ENCODE measurements at regions of chr15 and their contacts with region 1.

Region 1: GRCh38 chr15:90071208-90071807 is 31.0 kb downstream of the IDH2 start:
- DNase-seq: peak; percentile 83 to 89 (median 84)
- ATAC-seq: peak; percentile 23 to 83 (median 58)
- H3K4me3 ChIP-seq: no peak overlapping the region
- H3K27ac ChIP-seq: peak overlapping the region in 4 of 12 donors; percentile 8 to 60 (median 16)
- H3K4me1 ChIP-seq: peaks cover 0 to 27% (median 5%) of the 10 kb centered on the region in 12 donors
- H3K27me3 ChIP-seq: no peaks in the 10 kb centered on the region
- CTCF ChIP-seq: peak; percentile 73 to 90 (median 82)
- POLR2A ChIP-seq: no peak

Region 2: DNA sequence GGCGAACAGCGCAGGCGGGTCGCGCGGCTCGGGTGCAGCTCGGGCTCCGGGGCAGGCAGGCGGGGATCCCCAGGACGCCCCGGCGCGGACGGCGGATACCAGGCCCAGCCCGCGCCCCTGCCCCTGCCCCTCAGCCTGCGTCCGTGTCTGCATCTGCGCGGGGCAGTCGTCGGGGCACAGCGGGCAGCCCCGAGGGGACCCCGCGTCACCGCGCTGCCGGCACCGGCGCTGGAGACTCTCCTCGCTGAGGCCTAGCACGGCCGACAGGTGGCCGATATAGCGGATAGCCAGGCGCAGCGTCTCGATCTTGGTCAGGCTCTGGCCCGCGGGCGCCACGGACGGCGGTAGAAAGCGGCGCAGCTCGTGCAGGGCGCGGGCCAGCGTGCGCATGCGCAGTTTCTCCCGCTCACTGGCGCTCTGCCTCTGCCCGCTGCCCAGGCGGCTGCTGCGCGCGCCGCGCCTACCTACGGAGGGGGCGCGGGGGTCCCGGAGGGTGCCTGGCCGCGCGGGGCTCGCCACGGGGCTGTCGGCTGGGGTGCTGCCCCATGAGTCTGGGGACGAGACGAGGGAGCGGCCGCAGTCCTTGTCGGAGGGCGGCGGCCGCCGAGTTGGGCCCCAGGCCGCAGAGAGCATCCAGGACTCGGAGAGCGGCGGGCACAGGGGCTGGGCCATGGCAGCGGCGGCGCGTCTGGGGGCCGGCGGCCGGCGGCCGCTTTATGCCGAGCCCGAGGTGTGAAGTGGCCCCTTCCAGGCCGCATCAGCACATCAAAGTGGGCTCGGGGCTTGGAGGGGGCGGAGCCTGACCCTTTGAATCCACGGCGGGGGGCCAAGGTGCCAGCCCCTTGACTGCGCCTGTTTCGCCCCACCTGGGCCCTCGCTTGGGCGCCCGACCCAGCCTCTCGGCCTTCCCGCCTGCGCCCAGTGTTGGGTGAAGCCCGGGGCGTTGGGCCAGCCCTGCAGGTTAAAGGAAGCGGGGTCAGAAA is 320.5 kb before region 1 on chr15 and contains the start of gene MESP1:
- intact Hi-C with region 1: loop called in 3 of 10 experiments (anchors 10 kb)
- DNase-seq: peak; percentile 90 to 96 (median 93)
- ATAC-seq: peak; percentile 89 to 97 (median 94)
- H3K4me3 ChIP-seq: peak within 1 kb of the TSS; percentile 57 to 84 (median 74)
- H3K27ac ChIP-seq: peak within 1 kb of the TSS in 7 of 12 donors; percentile 27 to 81 (median 57)
- H3K4me1 ChIP-seq: peaks cover 0 to 18% (median 12%) of the 10 kb centered on the region in 12 donors
- H3K27me3 ChIP-seq: peaks cover 0 to 22% (median 4%) of the 10 kb centered on the region in 9 donors
- CTCF ChIP-seq: peak; percentile 40 to 93 (median 68)
- POLR2A ChIP-seq: peak in 1 of 2 donors; percentile 52
- total RNA-seq, gene MESP1: 1.3 to 6.9 (median 5.1) TPM

Region 3: GRCh38 chr15:89760303-89761008 is 310.9 kb before region 1 on chr15:
- intact Hi-C with region 1: loop called in 7 of 10 experiments (anchors 5 to 10 kb)
- DNase-seq: peak; percentile 67 to 89 (median 77)
- ATAC-seq: peak; percentile 76 to 93 (median 90)
- H3K4me3 ChIP-seq: no peak overlapping the region
- H3K27ac ChIP-seq: no peak overlapping the region
- H3K4me1 ChIP-seq: peaks cover 0 to 12% (median 0%) of the 10 kb centered on the region in 12 donors
- H3K27me3 ChIP-seq: no peaks in the 10 kb centered on the region
- CTCF ChIP-seq: peak; percentile 91 to 97 (median 94)
- POLR2A ChIP-seq: no peak

Region 4: DNA sequence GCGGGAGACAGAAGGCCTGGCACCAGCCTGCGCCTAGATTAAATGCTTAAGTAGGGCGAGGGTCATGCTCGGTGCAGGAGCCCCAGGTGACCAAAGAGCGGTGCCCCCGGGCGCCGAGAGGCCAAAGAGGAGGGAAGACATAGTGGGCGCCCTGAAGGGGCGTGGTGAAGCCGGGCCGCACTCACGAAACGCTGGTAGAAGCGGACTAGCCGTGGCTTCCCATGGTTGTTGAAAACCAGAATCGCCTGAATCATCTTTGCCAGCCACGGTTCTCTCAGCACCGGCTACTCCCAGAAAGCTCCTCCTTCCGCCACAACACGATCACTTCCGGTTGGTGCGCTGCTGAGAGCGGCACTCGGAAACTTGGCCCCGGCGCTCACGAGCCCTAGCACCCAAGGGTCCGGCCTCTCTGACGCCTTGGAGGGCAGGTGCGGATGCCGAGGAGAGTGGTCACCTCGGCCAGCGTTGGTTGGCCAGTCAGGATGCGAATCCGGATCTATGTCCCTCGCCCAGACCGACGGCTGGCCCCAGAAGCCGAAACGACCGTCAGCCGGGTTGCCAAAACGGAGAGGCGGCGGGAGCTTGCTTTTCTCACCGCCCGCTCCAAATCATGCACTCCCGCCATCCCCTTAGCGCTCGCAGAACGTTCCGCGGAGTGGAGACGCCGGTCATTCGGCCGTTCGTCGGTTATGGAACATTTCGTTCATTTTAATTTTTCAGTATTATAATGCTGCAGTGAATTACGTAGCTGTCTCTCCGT is 177.4 kb before region 1 on chr15 and contains the start of gene AP3S2:
- intact Hi-C with region 1: loop called in 6 of 10 experiments (anchors 2 to 5 kb)
- DNase-seq: peak; percentile 90 to 94 (median 93)
- ATAC-seq: peak; percentile 98 to 99 (median 99)
- H3K4me3 ChIP-seq: peak within 1 kb of the TSS; percentile 55 to 100 (median 91)
- H3K27ac ChIP-seq: peak within 1 kb of the TSS; percentile 42 to 98 (median 92)
- H3K4me1 ChIP-seq: peaks cover 0 to 30% (median 13%) of the 10 kb centered on the region in 12 donors
- H3K27me3 ChIP-seq: no peaks in the 10 kb centered on the region
- CTCF ChIP-seq: peak in 1 of 12 donors; percentile 7
- POLR2A ChIP-seq: peak in 1 of 2 donors; percentile 61
- total RNA-seq, gene AP3S2: 37.1 to 64.6 (median 43.3) TPM

Region 5: GRCh38 chr15:89904519-89904918 is 166.8 kb before region 1 on chr15:
- intact Hi-C with region 1: loop called in 5 of 10 experiments (anchors 5 kb)
- DNase-seq: no peak
- ATAC-seq: no peak
- H3K4me3 ChIP-seq: no peak overlapping the region
- H3K27ac ChIP-seq: no peak overlapping the region
- H3K4me1 ChIP-seq: peaks cover 0 to 9% (median under 1%) of the 10 kb centered on the region in 12 donors
- H3K27me3 ChIP-seq: no peaks in the 10 kb centered on the region
- CTCF ChIP-seq: no peak
- POLR2A ChIP-seq: no peak

Region 6: DNA sequence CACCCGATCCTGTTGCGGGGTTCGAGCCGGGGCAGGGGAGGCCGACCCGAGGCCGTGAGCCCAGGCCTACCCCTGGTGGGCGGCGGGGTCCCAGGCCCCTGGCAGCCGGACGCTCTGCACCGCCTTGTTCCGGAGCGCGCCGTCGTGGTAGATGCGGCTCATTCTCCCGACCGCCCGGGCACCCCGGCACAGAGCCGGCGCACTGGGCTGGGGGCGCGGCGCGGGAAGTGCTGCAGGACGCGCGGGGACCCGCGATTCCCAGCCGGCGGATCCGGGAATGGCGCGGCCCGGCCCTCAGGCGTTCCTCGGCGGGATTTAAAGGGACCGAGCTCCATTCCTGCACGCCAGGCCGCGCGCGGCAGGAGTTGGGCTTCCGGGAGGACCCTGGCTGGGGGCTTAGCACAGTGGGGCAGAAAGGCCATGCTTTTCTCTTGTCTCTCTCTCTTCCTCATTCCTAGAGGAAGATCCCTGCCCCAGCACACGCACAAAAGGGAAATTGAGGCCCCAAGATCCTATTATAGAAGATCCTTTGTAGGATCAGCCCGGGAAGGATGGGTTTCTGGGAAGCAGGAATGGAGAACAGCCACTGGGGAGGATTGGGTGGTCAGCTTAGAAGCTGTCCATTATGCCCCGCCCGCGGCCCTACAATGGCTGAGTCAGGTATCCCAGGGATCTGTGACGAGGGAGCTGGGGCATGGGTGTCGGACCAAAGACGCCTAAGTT is 158.5 kb before region 1 on chr15 and contains the start of gene ARPIN:
- intact Hi-C with region 1: loop called in 4 of 10 experiments (anchors 5 kb)
- DNase-seq: peak; percentile 65 to 83 (median 66)
- ATAC-seq: peak; percentile 69 to 92 (median 84)
- H3K4me3 ChIP-seq: peak within 1 kb of the TSS; percentile 65 to 99 (median 84)
- H3K27ac ChIP-seq: peak within 1 kb of the TSS in 11 of 12 donors; percentile 41 to 90 (median 77)
- H3K4me1 ChIP-seq: peaks cover 0 to 26% (median 13%) of the 10 kb centered on the region in 12 donors
- H3K27me3 ChIP-seq: no peaks in the 10 kb centered on the region
- CTCF ChIP-seq: no peak
- POLR2A ChIP-seq: no peak
- total RNA-seq, gene ARPIN: 7.3 to 15.3 (median 11.5) TPM

Region 7: GRCh38 chr15:90001683-90002427 is 69.5 kb before region 1 on chr15:
- intact Hi-C with region 1: loop called in 9 of 10 experiments (anchors 2 to 10 kb)
- DNase-seq: peak; percentile 64 to 77 (median 76)
- ATAC-seq: peak in 3 of 4 donors; percentile 25 to 50 (median 46)
- H3K4me3 ChIP-seq: peak overlapping the region; percentile 66 to 98 (median 85)
- H3K27ac ChIP-seq: peak overlapping the region; percentile 69 to 95 (median 87)
- H3K4me1 ChIP-seq: peaks cover 0 to 71% (median 39%) of the 10 kb centered on the region in 12 donors
- H3K27me3 ChIP-seq: no peaks in the 10 kb centered on the region
- CTCF ChIP-seq: no peak
- POLR2A ChIP-seq: no peak